Activated T-helper 2 cell treated with anti-CD3 and anti-CD28 coated beads, Interferon-gamma antibody, Interleukin-2, Interleukin-4, amounts not matched to agents 10 μg/mL and 5 μg/mL and 100 μg/mL, durations not matched to agents 14 hours and 24 hours and 36 hours (primary cell): ENCODE measurements at regions of chr17 and their contacts with region 1.

Region 1: DNA sequence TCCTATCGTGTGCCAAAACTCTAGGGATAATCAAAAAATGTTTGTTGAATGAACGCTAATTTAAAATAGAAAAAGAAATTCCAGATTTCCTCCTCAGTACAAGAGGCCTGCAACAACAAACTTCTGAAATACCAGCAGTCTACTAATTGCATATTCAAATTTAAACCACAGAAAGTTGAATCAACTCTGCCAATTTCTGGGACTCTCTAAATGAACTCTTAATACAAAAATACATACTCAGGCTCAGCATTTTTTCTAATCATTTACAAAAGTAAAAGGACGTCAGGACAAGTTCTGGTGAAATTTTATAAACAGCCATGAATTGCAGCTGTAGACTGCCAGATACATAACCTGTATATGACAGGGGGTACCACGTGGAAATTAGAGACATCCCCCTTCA is 49.0 kb downstream of the KANSL1 start:
- DNase-seq: no peak
- H3K4me3 Mint-ChIP-seq: no peak overlapping the region
- H3K27ac Mint-ChIP-seq: peak overlapping the region; percentile 26
- H3K4me1 Mint-ChIP-seq: peaks cover 75% of the 10 kb centered on the region
- H3K27me3 Mint-ChIP-seq: no peaks in the 10 kb centered on the region

Region 2: DNA sequence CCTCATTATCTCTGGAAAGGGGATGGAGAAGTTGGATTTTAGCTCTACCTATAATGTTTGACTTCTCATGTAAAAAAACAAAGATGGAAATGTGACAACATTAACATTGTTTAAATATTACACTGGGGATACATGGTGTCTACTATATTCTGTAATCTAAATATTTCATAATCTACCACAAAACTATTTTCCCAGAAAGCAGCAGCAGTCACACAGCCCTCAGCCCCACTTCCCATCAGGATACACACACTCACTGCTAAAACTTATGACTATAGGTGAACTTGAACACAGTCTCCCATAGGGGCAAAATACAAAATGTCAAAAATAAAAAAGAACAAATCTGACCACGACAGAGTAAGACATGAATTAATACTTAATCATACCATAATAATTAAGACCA is 46.7 kb before region 1 on chr17:
- intact Hi-C with region 1: loop called (anchors 1 kb)
- DNase-seq: no peak
- H3K4me3 Mint-ChIP-seq: no peak overlapping the region
- H3K27ac Mint-ChIP-seq: no peak overlapping the region
- H3K4me1 Mint-ChIP-seq: peaks cover 36% of the 10 kb centered on the region
- H3K27me3 Mint-ChIP-seq: no peaks in the 10 kb centered on the region

Region 3: GRCh38 chr17:46128453-46128852 is 15.8 kb before region 1 on chr17:
- intact Hi-C with region 1: no loop called
- DNase-seq: no peak
- H3K4me3 Mint-ChIP-seq: no peak overlapping the region
- H3K27ac Mint-ChIP-seq: no peak overlapping the region
- H3K4me1 Mint-ChIP-seq: peaks cover 37% of the 10 kb centered on the region
- H3K27me3 Mint-ChIP-seq: no peaks in the 10 kb centered on the region